Mammary epithelial cell (primary cell): ENCODE measurements at regions of chr3 and their contacts with region 1.

Region 1: DNA sequence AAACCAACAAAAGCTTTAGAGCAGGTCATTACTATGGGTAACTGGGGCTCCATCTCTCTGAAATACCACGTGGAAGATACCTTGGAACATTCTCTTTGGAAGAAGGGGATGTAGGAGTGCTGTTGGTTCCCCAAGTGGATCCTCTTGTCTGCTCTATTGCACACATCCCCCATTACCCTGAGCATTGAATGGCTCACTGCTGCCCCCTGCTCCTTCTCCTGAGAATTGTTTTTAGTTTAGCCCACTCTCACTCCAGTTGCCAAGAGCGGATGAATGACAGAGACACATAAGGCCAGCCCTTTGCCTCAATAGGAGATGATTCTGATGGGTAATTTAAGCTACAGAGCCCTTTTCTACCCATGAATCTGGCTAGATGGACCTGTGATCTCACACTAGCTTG is 135.6 kb upstream of the SUCLG2 start:
- DNase-seq: peak; percentile 30
- H3K4me3 ChIP-seq: no peak overlapping the region
- H3K27ac ChIP-seq: no peak overlapping the region
- H3K4me1 ChIP-seq: no peaks in the 10 kb centered on the region
- H3K27me3 ChIP-seq: no peaks in the 10 kb centered on the region
- CTCF ChIP-seq: peak; percentile 41 to 71

Region 2: DNA sequence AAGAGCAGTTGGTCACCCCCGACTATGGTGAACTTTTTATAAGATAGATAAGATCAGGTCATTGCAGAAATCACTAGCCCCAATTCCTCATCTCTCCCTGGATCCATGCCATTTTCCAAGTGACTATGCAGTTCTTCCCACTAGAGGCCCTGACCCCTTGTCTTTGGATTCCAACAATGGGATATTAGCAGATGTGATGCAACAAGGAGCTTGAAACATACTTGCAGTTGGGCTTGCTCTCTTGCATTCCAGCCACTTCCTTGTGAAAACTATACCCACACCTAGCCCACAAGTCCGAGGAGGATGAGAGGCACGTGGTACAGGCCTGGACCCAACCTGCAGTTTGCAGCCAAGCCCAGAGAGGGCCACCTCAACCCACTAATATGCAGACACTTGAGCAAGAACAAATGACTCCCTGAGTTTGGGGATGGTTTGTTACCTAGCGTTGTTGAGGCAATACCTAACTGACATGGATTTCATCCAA is 196.2 kb before region 1 on chr3:
- CTCF ChIA-PET with region 1: no interaction called
- dilution Hi-C with region 1: no loop called
- in situ Hi-C with region 1: no loop called
- intact Hi-C with region 1: loop called (anchors 5 kb)
- DNase-seq: peak; percentile 38
- H3K4me3 ChIP-seq: no peak overlapping the region
- H3K27ac ChIP-seq: no peak overlapping the region
- H3K4me1 ChIP-seq: no peaks in the 10 kb centered on the region
- H3K27me3 ChIP-seq: no peaks in the 10 kb centered on the region
- CTCF ChIP-seq: peak; percentile 30 to 39